Natural killer cell (primary cell): ENCODE measurements at regions of chr5 and their contacts with region 1.

Region 1: GRCh38 chr5:112174959-112175594 is 244.0 kb downstream of the EPB41L4A start:
- DNase-seq: peak in 1 of 2 donors; percentile 70
- ATAC-seq: peak; percentile 74 to 89 (median 75)
- H3K4me3 ChIP-seq: no peak overlapping the region
- H3K4me3 Mint-ChIP-seq: no peak overlapping the region
- H3K27ac ChIP-seq: no peak overlapping the region
- H3K27ac Mint-ChIP-seq: no peak overlapping the region
- H3K4me1 ChIP-seq: no peaks in the 10 kb centered on the region
- H3K4me1 Mint-ChIP-seq: peaks cover 6% of the 10 kb centered on the region in 2 donors
- H3K27me3 ChIP-seq: peaks cover 3% of the 10 kb centered on the region
- H3K27me3 Mint-ChIP-seq: no peaks in the 10 kb centered on the region
- CTCF ChIP-seq: peak; percentile 66

Region 2: DNA sequence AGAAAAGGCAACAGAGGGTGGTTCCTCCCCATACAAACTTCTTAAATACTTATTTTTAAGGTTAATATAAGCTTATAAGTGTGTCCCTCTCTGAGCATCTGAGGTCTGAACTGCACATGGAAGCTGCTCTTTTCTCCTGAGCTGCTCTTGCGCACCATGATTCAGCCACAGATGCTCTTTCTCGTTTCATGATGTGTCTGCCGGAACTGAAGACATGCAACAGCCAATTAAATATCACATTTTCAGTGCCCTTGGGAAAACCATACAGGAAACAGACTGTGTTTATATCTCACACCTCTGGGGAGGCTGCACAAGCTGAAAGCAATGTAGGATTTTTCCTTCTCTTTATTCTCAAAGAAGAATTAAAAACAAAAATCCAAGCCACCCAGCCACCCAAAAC is 321.3 kb before region 1 on chr5:
- intact Hi-C with region 1: no loop called
- DNase-seq: no peak
- ATAC-seq: no peak
- H3K4me3 ChIP-seq: no peak overlapping the region
- H3K4me3 Mint-ChIP-seq: no peak overlapping the region
- H3K27ac ChIP-seq: no peak overlapping the region
- H3K27ac Mint-ChIP-seq: no peak overlapping the region
- H3K4me1 ChIP-seq: no peaks in the 10 kb centered on the region
- H3K4me1 Mint-ChIP-seq: peaks cover 0 to 4% of the 10 kb centered on the region in 2 donors
- H3K27me3 ChIP-seq: no peaks in the 10 kb centered on the region
- H3K27me3 Mint-ChIP-seq: peaks cover under 1 to 2% of the 10 kb centered on the region in 2 donors
- CTCF ChIP-seq: no peak

Region 3: GRCh38 chr5:112419986-112420864 is 245.1 kb after region 1 on chr5:
- intact Hi-C with region 1: loop called (anchors 1 kb)
- DNase-seq: peak; percentile 42 to 65
- ATAC-seq: peak; percentile 73 to 84 (median 82)
- H3K4me3 ChIP-seq: peak overlapping the region; percentile 81
- H3K4me3 Mint-ChIP-seq: peak overlapping the region; percentile 89
- H3K27ac ChIP-seq: no peak overlapping the region
- H3K27ac Mint-ChIP-seq: peak overlapping the region in 1 of 2 donors; percentile 92
- H3K4me1 ChIP-seq: peaks cover 16% of the 10 kb centered on the region
- H3K4me1 Mint-ChIP-seq: peaks cover 10 to 20% of the 10 kb centered on the region in 2 donors
- H3K27me3 ChIP-seq: peaks cover 6% of the 10 kb centered on the region
- H3K27me3 Mint-ChIP-seq: peaks cover 11 to 22% of the 10 kb centered on the region in 2 donors
- CTCF ChIP-seq: peak; percentile 66

Region 4: DNA sequence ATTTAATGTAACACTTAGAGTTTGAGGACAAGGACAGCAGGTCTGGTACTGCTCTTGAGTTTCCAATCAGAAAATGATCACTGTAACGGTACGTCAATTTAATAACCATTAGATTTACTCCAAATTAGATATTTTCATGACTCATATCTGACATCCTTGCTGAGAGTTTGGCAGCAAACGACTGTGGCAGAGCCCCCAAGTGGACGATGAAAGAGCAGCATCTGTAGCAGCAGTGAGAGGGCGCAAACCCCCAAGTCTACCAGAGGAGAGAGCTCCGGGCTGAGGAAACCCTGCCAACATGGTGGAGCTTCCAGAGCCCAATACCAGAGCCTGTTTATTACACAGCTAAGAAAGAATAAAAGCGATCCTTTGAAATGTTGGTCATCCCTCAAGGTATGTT is 317.2 kb after region 1 on chr5:
- intact Hi-C with region 1: loop called (anchors 5 kb)
- DNase-seq: peak in 1 of 2 donors; percentile 6
- ATAC-seq: peak; percentile 65 to 85 (median 80)
- H3K4me3 ChIP-seq: no peak overlapping the region
- H3K4me3 Mint-ChIP-seq: no peak overlapping the region
- H3K27ac ChIP-seq: no peak overlapping the region
- H3K27ac Mint-ChIP-seq: no peak overlapping the region
- H3K4me1 ChIP-seq: no peaks in the 10 kb centered on the region
- H3K4me1 Mint-ChIP-seq: no peaks in the 10 kb centered on the region
- H3K27me3 ChIP-seq: no peaks in the 10 kb centered on the region
- H3K27me3 Mint-ChIP-seq: peaks cover 25 to 26% of the 10 kb centered on the region in 2 donors
- CTCF ChIP-seq: peak; percentile 44

Region 5: GRCh38 chr5:112757468-112758208 is 582.6 kb after region 1 on chr5:
- intact Hi-C with region 1: loop called (anchors 1 kb)
- DNase-seq: peak in 1 of 2 donors; percentile 77
- ATAC-seq: peak; percentile 83 to 95 (median 90)
- H3K4me3 ChIP-seq: no peak overlapping the region
- H3K4me3 Mint-ChIP-seq: no peak overlapping the region
- H3K27ac ChIP-seq: peak overlapping the region; percentile 1
- H3K27ac Mint-ChIP-seq: peak overlapping the region; percentile 29 to 45
- H3K4me1 ChIP-seq: no peaks in the 10 kb centered on the region
- H3K4me1 Mint-ChIP-seq: peaks cover 9 to 15% of the 10 kb centered on the region in 2 donors
- H3K27me3 ChIP-seq: no peaks in the 10 kb centered on the region
- H3K27me3 Mint-ChIP-seq: no peaks in the 10 kb centered on the region
- CTCF ChIP-seq: peak; percentile 92